Activated CD4-positive, alpha-beta T cell treated with anti-CD3 and anti-CD28 coated beads, Interleukin-2, amount 10 ng/mL, durations not matched to agents 24 days and 14 days (primary cell): ENCODE measurements at regions of chr15 and their contacts with region 1.

Region 1: DNA sequence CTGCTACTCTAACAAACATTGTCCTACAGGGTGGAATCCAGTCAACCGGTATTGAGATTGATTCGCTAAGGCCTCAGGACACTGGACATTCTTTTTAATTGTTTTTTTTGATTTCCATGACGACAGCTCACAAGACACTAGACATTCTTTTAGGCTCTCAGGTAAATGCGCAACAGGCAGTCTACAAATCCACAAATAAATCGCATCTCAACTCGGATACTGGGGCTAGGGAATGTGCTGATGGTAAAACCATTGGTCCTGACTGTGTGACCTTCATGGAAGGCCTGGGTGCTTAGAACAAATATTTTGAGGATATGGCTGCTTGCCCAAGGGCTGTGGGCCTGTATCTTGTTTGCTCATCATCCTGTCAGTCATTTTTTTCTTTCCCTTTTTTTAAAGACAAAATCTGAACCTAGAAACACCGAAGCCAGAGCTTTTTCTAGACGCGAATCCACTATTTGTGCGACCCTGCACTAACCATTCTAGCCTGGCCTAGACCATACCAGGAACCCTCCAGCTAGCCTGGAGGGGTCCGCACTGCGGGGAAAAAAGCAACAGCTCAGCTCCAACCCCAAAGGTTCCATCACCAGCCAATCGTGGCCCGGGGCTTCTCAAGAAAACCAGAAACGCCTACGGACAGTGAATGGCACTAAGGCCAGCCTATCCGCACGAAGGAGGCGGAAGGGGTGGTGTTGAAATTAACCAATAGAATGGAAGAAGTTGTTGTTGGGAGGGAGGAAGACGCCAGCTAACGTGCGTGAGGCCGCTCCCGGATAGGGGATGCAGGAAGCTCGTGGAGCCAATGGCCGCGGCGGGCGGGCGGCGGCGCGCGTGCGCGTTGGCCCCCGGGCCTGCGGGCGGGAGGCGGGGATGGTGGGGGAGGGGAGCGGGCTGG is 18.1 kb upstream of the CHD2 start:
- DNase-seq: peak; percentile 99
- H3K4me3 Mint-ChIP-seq: peak overlapping the region; percentile 95
- H3K27ac Mint-ChIP-seq: peak overlapping the region; percentile 98
- H3K4me1 Mint-ChIP-seq: peaks cover 52% of the 10 kb centered on the region
- H3K27me3 Mint-ChIP-seq: peaks cover 2% of the 10 kb centered on the region

Region 2: DNA sequence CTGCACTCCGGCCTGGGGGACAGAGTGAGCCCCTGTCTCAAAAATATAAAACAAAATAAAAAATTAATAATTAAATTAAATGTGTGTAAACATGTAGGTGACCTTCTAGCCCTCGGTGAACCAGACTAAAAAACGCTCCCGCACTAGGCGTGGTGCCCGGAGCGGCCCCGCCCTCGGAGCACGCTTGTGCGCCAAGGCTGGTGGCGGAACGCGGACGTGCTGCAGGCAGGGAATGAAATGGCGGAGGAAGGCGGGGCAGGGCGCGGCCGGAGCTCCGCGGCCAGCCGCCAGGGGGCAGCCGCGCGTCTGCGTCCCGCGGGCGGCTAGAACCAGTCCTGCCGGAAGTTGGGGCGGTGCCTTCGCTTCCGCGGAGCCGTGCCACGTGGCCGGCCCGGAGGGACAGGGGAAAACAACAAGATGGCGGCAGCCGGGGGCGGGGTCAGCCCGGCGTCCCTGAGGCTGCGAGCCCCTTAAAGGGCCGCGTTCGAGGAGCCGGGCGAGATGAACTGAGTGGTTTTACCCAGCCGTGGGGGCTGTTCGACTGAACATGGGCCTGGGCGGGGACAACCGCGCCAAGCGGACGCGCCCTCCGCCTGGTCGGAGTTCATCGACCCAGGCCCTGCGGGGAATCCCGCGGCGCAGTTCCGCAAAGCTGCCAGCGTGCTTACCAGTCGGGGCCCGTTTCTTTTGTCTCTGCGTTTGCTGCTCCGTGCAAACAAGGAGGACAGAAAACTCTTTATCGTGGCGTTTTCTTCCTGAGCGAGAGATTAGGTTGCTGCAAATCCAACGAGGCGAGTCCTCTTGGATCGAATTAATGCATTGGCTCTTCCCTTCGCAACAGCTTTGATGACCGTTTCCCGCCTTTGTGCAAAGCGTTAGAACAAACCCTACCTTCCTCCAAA is 72.8 kb before region 1 on chr15:
- intact Hi-C with region 1: loop called (anchors 1 kb)
- DNase-seq: peak; percentile 100
- H3K4me3 Mint-ChIP-seq: peak overlapping the region; percentile 89
- H3K27ac Mint-ChIP-seq: peak overlapping the region; percentile 98
- H3K4me1 Mint-ChIP-seq: peaks cover 45% of the 10 kb centered on the region
- H3K27me3 Mint-ChIP-seq: no peaks in the 10 kb centered on the region

Region 3: GRCh38 chr15:92831655-92832328 is 50.3 kb before region 1 on chr15:
- intact Hi-C with region 1: loop called (anchors 1 kb)
- DNase-seq: peak; percentile 97
- H3K4me3 Mint-ChIP-seq: peak overlapping the region; percentile 76
- H3K27ac Mint-ChIP-seq: peak overlapping the region; percentile 97
- H3K4me1 Mint-ChIP-seq: peaks cover 34% of the 10 kb centered on the region
- H3K27me3 Mint-ChIP-seq: peaks cover 2% of the 10 kb centered on the region

Region 4: DNA sequence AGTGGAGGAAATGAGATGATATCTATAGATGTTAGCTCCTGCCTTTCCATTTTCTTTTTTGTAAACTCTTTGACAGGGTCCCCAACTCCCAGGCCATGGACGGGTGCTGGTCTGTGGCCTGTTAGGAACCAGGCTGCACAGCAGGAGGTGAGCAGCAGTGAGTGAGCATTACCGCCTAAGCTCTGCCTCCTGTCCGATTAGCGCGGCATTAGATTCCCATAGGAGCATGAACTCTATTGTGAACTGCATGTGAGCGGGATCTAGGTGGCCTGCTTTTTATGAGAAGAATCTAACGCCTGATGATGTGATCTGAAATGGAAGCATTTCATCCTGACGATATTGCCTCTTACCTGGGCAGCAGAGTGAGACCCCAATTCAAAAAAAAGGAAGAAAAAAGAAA is 38.7 kb before region 1 on chr15:
- intact Hi-C with region 1: no loop called
- DNase-seq: no peak
- H3K4me3 Mint-ChIP-seq: peak overlapping the region; percentile 21
- H3K27ac Mint-ChIP-seq: peak overlapping the region; percentile 77
- H3K4me1 Mint-ChIP-seq: peaks cover 54% of the 10 kb centered on the region
- H3K27me3 Mint-ChIP-seq: no peaks in the 10 kb centered on the region

Region 5: DNA sequence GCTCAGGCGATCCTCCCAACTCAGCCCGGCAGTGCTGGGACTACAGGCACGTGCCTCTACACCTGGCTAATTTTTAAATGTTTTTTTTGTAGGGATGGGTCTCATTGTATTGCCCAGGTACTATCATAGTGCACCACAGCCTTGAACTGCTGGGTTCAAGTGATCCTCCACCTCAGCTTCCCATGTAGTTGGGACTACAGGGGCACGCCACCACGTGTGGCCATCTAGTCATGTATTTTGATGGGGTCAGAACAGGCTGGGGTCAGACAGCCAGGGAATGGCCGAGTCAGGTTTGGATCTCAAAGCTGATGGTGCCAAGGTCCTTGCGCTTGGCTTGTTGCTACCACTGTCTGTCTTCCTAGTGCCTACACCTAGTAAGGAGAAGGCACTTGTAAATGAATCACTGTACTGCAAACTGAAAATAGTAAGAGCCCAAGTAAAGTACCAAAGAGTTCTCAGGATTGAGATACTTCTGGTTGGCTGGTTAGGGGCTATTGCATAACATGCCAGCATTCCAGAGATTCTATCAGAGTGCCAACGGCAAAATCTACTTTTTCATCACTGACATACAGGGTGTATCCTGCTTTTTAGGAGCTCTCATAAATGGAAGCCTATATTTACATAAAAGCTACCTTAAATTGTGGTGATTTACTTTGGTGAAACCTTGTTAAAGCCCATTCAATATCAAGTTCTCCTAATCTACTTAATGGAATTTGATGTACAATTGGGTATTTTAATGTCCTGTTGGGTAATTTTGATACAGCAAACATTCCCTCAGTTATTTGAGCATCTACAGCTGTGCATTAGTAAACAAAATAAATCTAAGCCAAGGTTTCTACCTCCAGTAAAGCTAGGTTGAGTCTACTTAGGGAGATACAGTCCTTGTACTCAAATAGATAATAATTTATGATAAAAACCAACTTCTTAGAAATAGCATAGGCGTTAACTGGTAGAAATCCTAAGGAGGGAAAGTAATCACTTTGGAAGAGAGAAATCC is 12.8 kb before region 1 on chr15:
- intact Hi-C with region 1: no loop called
- DNase-seq: no peak
- H3K4me3 Mint-ChIP-seq: no peak overlapping the region
- H3K27ac Mint-ChIP-seq: no peak overlapping the region
- H3K4me1 Mint-ChIP-seq: peaks cover 2% of the 10 kb centered on the region
- H3K27me3 Mint-ChIP-seq: peaks cover 6% of the 10 kb centered on the region

Region 6: GRCh38 chr15:92903941-92904831 is 22.1 kb after region 1 on chr15:
- intact Hi-C with region 1: loop called (anchors 1 kb)
- DNase-seq: peak; percentile 100
- H3K4me3 Mint-ChIP-seq: peak overlapping the region; percentile 89
- H3K27ac Mint-ChIP-seq: peak overlapping the region; percentile 100
- H3K4me1 Mint-ChIP-seq: peaks cover 56% of the 10 kb centered on the region
- H3K27me3 Mint-ChIP-seq: no peaks in the 10 kb centered on the region